GM12878 (cell line): ENCODE measurements at regions of chr5 and their contacts with region 1.

Region 1: GRCh38 chr5:160743027-160743426 is 109.0 kb downstream of the ATP10B start:
- DNase-seq: peak; percentile 43
- ATAC-seq: peak; percentile 64
- H3K4me3 ChIP-seq: no peak overlapping the region
- H3K27ac ChIP-seq: no peak overlapping the region
- H3K4me1 ChIP-seq: peaks cover under 1% of the 10 kb centered on the region; the same call in 1 of the 2 replicates
- H3K27me3 ChIP-seq: no peaks in the 10 kb centered on the region
- CTCF ChIP-seq: no peak
- EP300 ChIP-seq: no peak
- POLR2A ChIP-seq: no peak
- RAD21 ChIP-seq: no peak

Region 2: DNA sequence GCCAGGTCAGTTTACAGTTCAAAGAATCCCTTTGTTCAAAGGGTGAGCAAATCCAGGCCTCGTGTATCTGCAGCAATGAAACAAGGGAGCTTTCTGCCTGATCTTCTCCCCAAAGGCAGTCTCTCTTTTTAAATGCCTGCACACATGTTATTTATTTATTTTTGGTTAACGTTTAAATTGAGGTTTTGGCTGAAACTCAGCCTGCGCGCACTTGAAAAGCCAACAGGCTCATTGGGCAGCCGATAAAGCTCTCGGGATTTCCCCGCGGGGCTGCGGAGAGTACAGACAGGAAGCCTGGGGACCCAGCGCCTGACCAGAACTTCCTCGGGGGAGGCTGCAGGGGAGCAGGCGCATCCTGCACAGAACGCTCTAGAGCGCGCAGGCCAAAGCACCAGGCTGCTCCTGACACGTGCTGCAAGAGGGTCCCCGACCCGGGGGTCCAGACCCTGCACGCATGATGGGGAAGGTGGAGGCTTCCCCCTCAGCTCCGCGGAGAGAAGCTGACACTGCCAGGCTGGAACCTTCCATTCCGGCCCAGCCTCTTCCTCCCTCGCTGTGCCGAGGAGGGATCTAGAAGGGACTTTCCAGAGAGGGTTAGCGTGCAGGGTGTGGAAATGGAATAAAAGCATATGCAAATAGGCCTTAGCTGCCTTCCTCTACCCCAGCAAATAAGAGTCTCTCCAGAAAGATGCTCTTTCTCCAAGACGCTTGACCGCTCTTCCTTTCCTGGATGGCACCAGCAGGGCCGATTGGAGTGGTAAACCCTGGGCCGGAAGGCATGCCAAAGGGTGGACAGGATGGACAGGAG is 275.3 kb before region 1 on chr5:
- CTCF ChIA-PET with region 1: no interaction called
- POLR2A ChIA-PET with region 1: no interaction called
- RAD21 ChIA-PET with region 1: no interaction called
- SMC1A ChIA-PET with region 1: no interaction called
- in situ Hi-C with region 1: no loop called
- intact Hi-C with region 1: no loop called
- DNase-seq: peak; percentile 96
- ATAC-seq: peak; percentile 80
- H3K4me3 ChIP-seq: peak overlapping the region; percentile 88
- H3K27ac ChIP-seq: peak overlapping the region; percentile 96
- H3K4me1 ChIP-seq: peaks cover 35% of the 10 kb centered on the region
- H3K27me3 ChIP-seq: no peaks in the 10 kb centered on the region
- CTCF ChIP-seq: no peak
- EP300 ChIP-seq: peak; percentile 84 to 95
- POLR2A ChIP-seq: peak; percentile 91
- RAD21 ChIP-seq: peak; percentile 8; the same call in 1 of the 2 replicates

Region 3: DNA sequence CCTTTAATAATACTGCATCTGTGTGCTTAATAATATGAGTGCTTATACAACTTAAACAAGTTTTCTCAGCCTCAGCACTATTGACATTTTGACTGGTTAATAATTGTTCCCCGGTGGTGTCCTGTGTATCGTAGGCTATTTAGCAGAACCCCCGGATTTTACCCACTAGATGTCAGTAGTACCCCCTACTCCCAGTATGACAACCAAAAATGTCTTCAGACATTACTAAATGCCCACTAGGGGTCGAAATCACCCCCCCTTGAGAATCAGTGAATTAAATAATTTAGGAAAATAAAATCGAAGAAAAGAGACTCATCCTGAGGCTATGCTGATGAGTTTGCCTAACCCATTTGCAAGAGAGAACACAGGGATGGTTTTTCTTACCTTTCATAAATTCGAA is 57.3 kb before region 1 on chr5:
- CTCF ChIA-PET with region 1: no interaction called
- POLR2A ChIA-PET with region 1: no interaction called
- RAD21 ChIA-PET with region 1: no interaction called
- SMC1A ChIA-PET with region 1: no interaction called
- in situ Hi-C with region 1: loop called (anchors 5 kb)
- intact Hi-C with region 1: no loop called
- DNase-seq: peak; percentile 13
- ATAC-seq: peak; percentile 89
- H3K4me3 ChIP-seq: no peak overlapping the region
- H3K27ac ChIP-seq: no peak overlapping the region
- H3K4me1 ChIP-seq: no peaks in the 10 kb centered on the region
- H3K27me3 ChIP-seq: no peaks in the 10 kb centered on the region; a peak in 1 of 4 replicates
- CTCF ChIP-seq: peak; percentile 47 to 70 (median 50)
- EP300 ChIP-seq: no peak
- POLR2A ChIP-seq: no peak
- RAD21 ChIP-seq: peak; percentile 64